Left lung (tissue), 14 donors: ENCODE measurements at regions of chr10 and their contacts with region 1.

Region 1: GRCh38 chr10:101095542-101096213 is 33.9 kb downstream of the KAZALD1 start:
- DNase-seq: peak in 3 of 4 donors; percentile 34 to 62 (median 42)
- ATAC-seq: peak; percentile 92
- H3K4me3 ChIP-seq: no peak overlapping the region
- H3K27ac ChIP-seq: no peak overlapping the region
- H3K4me1 ChIP-seq: no peaks in the 10 kb centered on the region
- H3K27me3 ChIP-seq: peaks cover 19 to 97% of the 10 kb centered on the region in 2 donors
- CTCF ChIP-seq: peak; percentile 76 to 83

Region 2: DNA sequence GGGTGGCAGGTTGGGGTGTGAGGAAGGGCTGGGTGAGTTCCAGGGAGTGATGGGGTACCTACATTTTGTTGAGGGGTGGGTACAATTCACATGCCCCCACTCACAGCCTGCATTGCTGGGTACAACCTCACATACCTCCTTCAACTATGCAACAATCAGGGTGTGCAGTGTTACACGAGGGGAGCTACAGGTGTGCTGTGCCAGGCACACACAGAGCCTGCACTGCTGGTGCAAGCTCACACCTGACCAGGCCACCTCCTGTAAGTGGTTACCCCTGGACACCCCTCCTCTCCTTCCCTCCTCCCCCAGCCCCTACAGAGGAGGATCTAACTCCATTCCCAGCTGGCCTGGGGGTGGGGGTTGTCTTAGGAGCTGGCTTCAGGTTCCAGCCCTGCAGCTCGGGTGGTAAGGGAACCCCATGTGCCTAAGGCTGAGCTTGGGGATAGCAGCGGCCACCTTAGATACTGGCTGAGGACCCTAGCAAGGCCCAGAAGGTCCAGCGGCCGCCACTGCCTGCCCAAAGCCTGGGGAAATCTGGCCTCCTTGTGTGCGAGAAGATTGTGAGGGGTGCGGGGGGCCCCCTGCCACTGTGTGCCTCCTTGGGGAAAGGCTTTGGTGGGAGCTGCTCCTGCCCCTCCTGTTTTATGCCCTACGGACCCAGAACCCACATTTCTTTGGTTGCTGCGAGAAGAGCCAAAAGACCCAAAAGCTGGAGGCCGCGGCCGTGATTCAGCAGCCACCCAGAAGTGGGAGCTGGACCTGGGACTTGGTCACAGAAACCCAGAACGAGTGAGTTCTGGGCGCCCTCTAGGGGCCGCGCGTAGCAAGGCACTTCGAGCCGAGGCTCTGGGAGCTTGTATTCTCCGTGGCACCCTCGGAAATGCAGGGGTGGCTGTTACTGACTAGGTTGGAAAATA is 46.2 kb after region 1 on chr10:
- intact Hi-C with region 1: loop called in 1 of 2 experiments (anchors 5 kb)
- DNase-seq: peak; percentile 74 to 94 (median 86)
- ATAC-seq: peak; percentile 97
- H3K4me3 ChIP-seq: no peak overlapping the region
- H3K27ac ChIP-seq: no peak overlapping the region
- H3K4me1 ChIP-seq: peaks cover 0 to 3% of the 10 kb centered on the region in 2 donors
- H3K27me3 ChIP-seq: peaks cover 96 to 100% of the 10 kb centered on the region in 2 donors
- CTCF ChIP-seq: peak; percentile 96

Region 3: GRCh38 chr10:101195921-101196320 is 100.2 kb after region 1 on chr10:
- intact Hi-C with region 1: no loop called
- DNase-seq: no peak
- ATAC-seq: no peak
- H3K4me3 ChIP-seq: no peak overlapping the region
- H3K27ac ChIP-seq: no peak overlapping the region
- H3K4me1 ChIP-seq: no peaks in the 10 kb centered on the region
- H3K27me3 ChIP-seq: peaks cover 0 to 59% of the 10 kb centered on the region in 2 donors
- CTCF ChIP-seq: no peak